ENCODE measurements at regions of chrX and their contacts with region 1.

Region 1: GRCh38 chrX:130974323-130974722 is 71.3 kb upstream of the ENOX2 start:
- DNase-seq: no peak
- ATAC-seq: no peak
- H3K4me3 ChIP-seq: no peak overlapping the region
- H3K27ac ChIP-seq: no peak overlapping the region
- H3K4me1 ChIP-seq: no peaks in the 10 kb centered on the region
- H3K27me3 ChIP-seq: no peaks in the 10 kb centered on the region

Region 2: DNA sequence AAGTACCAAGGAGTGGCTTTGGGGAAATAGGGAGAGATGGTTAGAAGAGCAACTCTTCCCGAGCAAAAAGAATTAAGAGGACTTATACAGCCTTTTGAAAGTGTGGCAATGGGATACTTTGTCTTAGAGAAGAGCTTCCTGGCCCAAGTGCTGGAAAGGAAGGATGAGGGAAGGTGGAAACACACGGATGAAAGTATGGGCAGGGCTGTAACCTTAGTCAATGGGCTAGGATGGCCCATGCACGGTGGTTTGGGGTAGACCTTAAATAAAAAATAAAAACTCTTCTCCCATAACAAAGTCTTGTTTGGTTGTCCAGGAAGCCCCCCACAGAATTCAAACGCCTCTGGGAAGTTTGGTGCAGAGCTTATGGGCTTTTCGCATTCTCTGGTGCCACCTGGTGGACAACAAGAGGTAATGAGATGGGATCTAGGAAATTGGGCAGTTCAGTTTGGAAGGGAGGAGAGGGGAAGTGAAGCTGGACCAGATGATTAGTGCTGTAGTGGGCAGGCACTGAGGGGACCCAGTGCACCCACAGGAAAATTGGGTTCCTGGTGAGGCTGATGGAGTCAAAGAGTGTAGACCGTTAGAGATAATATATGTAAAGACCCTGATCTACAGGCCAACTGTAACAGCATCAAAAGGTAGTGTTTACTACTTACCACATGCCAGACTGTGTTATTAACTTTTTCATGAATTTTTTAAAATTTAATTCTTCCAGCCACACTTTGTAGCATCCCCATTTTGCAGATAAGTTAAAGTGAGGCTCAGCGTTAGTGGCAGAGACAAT is 57.5 kb before region 1 on chrX:
- intact Hi-C with region 1: no loop called
- DNase-seq: no peak
- ATAC-seq: peak; percentile 74
- H3K4me3 ChIP-seq: no peak overlapping the region
- H3K27ac ChIP-seq: no peak overlapping the region
- H3K4me1 ChIP-seq: no peaks in the 10 kb centered on the region
- H3K27me3 ChIP-seq: no peaks in the 10 kb centered on the region

Region 3: DNA sequence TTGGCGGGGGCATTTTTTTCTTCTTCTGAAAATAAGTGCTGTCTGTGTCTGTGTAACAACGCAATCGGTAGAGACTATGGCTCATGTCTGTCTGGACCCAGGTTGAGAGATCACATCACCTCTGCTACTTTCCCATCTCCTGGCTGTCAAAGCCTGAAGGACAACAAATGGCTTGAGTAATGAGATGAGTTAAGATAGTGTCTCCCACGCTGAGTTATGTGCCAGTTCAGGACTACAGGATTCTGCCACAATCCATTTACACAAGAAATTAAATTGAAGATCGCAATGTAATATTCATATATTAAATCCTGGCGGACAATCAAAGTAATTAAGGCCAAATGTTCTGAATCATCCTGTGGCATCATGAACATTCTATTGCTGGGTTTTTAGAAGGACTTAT is 67.3 kb after region 1 on chrX:
- intact Hi-C with region 1: no loop called
- DNase-seq: no peak
- ATAC-seq: no peak
- H3K4me3 ChIP-seq: no peak overlapping the region
- H3K27ac ChIP-seq: no peak overlapping the region
- H3K4me1 ChIP-seq: no peaks in the 10 kb centered on the region
- H3K27me3 ChIP-seq: no peaks in the 10 kb centered on the region

Region 4: GRCh38 chrX:131053076-131053475 is 78.8 kb after region 1 on chrX:
- intact Hi-C with region 1: no loop called
- DNase-seq: no peak
- ATAC-seq: no peak
- H3K4me3 ChIP-seq: no peak overlapping the region
- H3K27ac ChIP-seq: no peak overlapping the region
- H3K4me1 ChIP-seq: no peaks in the 10 kb centered on the region
- H3K27me3 ChIP-seq: no peaks in the 10 kb centered on the region

Region 5: GRCh38 chrX:131633285-131633917 is 659.1 kb after region 1 on chrX:
- intact Hi-C with region 1: loop called (anchors 5 kb)
- DNase-seq: no peak
- ATAC-seq: no peak
- H3K4me3 ChIP-seq: no peak overlapping the region
- H3K27ac ChIP-seq: no peak overlapping the region
- H3K4me1 ChIP-seq: no peaks in the 10 kb centered on the region
- H3K27me3 ChIP-seq: no peaks in the 10 kb centered on the region

Region 6: DNA sequence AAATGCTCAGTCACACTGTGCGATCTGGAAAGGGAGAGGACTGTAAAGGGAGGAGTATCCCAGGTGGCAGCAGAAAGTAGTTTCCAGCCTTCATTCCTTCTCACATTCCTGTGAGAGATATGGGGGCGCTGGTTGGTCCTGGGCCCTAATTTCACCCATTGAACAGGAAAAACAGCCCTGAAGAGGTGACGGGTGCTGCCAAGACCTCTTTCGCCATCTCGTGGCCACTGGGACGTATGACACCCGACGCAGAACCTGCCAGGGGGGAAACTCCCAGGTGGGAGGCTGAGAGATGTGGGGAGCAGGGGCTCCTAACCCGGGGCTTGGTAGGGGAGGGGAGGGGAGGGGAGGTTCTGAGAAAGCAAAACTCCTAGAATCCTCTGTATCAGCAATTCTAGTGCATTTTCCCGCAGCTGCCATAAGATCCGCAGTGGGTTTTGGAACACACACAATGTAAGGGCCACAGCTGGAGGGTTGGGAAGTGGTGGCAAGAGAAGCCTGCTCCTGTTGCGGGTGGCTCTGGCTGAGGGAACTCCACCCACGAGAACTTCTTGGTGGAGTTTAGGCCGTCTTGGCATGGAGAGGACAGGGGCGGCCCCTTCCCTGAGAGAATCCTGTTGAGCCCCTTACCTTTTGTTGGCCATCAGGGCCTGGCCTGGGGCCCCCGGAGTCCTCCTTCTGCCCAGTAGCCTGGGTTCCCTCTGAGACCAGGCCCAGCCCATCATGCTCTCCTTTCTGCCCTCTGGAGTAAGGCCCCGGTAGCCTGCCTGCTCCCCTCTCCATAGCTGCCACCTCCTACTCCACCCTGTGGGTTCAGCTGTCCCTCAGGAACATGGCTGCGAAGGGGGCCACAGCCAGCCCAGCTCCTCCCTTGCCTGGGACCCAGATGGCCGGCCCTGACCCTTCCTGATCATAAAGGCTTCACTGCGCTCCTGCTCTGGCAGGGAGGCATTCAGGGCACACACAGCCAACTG is 703.6 kb after region 1 on chrX:
- intact Hi-C with region 1: no loop called
- DNase-seq: peak in 1 of 2 donors; percentile 54
- ATAC-seq: peak; percentile 53
- H3K4me3 ChIP-seq: no peak overlapping the region
- H3K27ac ChIP-seq: no peak overlapping the region
- H3K4me1 ChIP-seq: no peaks in the 10 kb centered on the region
- H3K27me3 ChIP-seq: no peaks in the 10 kb centered on the region

Measured in aorta (tissue), 5 donors.